ENCODE measurements at regions of chr12 and their contacts with region 1.

Region 1: DNA sequence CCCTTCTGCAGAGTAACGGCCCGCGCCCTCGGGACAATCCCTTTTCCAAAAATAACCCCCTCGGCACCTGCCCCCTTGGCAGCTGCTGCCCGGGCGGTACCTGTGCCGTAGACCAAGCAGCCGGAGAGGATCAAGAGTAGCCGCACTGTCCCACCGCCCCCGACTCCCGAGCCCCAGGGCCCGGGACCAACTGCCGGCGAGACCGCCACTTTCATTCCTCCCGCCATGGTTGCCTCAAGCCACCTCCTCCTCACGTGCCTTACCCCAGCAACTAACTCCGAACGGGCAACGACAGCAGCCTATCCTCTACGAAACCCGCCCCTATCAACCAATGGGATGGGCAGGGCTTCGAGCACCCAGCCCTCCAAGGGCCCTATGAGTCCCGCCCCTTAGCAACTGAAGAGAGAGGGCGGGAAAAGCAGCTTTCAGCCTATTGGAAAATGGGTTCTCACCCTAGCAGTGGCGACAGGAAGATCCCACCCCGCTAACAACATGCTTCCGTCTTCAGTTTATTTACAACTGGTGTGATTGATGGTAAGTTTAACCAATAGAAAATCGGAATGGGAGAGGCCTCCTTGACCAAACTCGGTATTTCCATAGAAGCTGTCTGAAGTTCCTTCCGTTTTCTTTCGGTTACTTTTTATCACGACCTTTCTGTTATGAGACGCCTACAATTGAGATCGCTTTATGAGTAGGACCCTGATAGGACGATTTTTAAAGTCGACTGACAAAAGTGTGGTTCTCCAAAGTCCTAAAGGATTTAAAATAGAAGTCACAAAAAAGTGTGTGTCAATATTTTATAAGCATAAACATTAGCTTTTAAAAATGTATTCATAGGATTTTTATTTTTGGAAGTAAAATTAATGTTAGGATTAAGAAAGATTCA is at the start of gene NEMP1:
- DNase-seq: peak; percentile 100
- ATAC-seq: peak; percentile 99
- H3K4me3 ChIP-seq: peak within 1 kb of the TSS; percentile 86 to 91 (median 87)
- H3K27ac ChIP-seq: peak within 1 kb of the TSS; percentile 69
- H3K4me1 ChIP-seq: peaks cover 8% of the 10 kb centered on the region
- H3K27me3 ChIP-seq: no peaks in the 10 kb centered on the region
- CTCF ChIP-seq: no peak
- EP300 ChIP-seq: peak in 1 of 2 experiments; percentile 24; a peak in 1 of 4 replicates
- POLR2A ChIP-seq: peak; percentile 70 to 74
- RAD21 ChIP-seq: 0 out of 2 replicates have a peak, but pooled peaks have one; percentile 17
- total RNA-seq, gene NEMP1: 8.3 and 12.9 TPM in 2 replicates

Region 2: DNA sequence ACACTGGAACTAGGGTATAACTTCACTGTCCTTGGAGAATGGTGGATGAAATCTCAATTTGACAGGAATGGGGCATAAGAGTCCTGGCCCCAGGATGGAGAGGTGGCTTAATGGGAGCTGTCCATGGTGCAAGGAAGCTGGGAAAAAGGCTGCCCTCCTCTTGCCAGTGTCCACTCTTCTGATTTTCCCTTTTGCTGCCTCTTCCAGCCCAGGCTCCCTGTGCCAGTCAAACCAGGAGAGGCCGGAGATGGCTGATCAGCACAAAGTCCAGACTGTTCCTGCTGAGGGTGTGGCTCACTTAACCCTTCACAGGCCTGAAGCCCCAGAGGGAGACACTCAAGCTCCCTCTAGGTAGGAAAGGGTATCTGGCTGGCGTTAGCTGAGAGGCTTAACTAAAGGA is 28.9 kb before region 1 on chr12 and contains the start of gene MYO1A:
- CTCF ChIA-PET with region 1: no interaction called
- POLR2A ChIA-PET with region 1: interaction called, 11 read pairs
- in situ Hi-C with region 1: no loop called
- intact Hi-C with region 1: no loop called
- DNase-seq: peak; percentile 47
- ATAC-seq: peak; percentile 76
- H3K4me3 ChIP-seq: peak within 1 kb of the TSS; percentile 43 to 54 (median 49); a peak in 5 of 6 replicates
- H3K27ac ChIP-seq: no peak within 1 kb of the TSS
- H3K4me1 ChIP-seq: peaks cover 38% of the 10 kb centered on the region
- H3K27me3 ChIP-seq: no peaks in the 10 kb centered on the region
- CTCF ChIP-seq: no peak
- EP300 ChIP-seq: no peak
- POLR2A ChIP-seq: no peak
- RAD21 ChIP-seq: no peak
- total RNA-seq, gene MYO1A: 5.3 TPM in 2 replicates

Region 3: DNA sequence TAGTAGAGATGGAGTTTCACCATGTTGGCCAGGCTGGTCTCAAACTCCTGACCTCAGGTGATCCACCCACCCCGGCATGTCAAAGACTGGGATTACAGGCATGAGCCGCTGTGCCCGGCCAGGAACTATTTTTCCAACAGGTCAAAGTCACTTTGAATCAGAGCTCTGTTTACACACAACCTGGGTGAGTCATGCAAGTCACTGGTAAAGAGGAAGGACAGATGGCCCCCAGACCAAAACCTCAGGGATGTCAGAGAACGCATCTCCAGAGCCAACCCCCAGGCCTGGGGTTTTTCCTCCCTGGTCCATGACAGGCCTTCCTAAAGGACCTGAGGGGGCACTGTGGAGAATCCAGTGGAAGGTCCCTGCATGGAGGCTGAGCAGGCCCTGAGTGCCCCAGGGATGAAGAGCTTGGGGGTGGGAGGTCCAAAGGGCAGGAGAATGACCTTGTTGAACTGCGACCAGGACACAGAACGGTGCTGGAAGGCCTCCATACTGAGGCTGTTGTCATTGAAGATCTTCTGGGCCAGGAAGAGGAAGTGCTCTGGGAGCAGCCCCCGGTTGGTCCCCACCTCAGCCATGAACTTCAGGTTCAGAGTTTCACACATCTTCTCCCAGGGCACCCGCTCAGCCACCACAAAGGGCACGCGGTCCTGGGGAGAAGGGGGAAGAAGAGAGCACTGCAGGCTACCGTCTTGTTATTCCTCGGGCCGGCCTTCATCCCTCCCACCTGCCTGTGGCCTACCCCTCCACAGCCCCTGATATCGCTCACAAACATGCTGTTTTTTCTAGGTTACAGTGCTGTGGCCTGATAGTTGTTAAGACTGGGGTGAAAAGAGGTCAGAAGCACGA is 23.3 kb after region 1 on chr12:
- CTCF ChIA-PET with region 1: no interaction called
- POLR2A ChIA-PET with region 1: interaction called, 24 read pairs
- in situ Hi-C with region 1: no loop called
- intact Hi-C with region 1: no loop called
- DNase-seq: peak; percentile 99
- ATAC-seq: peak; percentile 88
- H3K4me3 ChIP-seq: peak overlapping the region; percentile 19 to 65 (median 34); a peak in 5 of 6 replicates
- H3K27ac ChIP-seq: peak overlapping the region; percentile 99
- H3K4me1 ChIP-seq: peaks cover 44% of the 10 kb centered on the region
- H3K27me3 ChIP-seq: no peaks in the 10 kb centered on the region
- CTCF ChIP-seq: peak; percentile 58
- EP300 ChIP-seq: peak; percentile 52 to 72; a peak in 3 of 4 replicates
- POLR2A ChIP-seq: peak; percentile 53 to 71; a peak in 3 of 4 replicates
- RAD21 ChIP-seq: no peak